Posterior cingulate gyrus (tissue), 11 donors: ENCODE measurements at regions of chr6 and their contacts with region 1.

Region 1: DNA sequence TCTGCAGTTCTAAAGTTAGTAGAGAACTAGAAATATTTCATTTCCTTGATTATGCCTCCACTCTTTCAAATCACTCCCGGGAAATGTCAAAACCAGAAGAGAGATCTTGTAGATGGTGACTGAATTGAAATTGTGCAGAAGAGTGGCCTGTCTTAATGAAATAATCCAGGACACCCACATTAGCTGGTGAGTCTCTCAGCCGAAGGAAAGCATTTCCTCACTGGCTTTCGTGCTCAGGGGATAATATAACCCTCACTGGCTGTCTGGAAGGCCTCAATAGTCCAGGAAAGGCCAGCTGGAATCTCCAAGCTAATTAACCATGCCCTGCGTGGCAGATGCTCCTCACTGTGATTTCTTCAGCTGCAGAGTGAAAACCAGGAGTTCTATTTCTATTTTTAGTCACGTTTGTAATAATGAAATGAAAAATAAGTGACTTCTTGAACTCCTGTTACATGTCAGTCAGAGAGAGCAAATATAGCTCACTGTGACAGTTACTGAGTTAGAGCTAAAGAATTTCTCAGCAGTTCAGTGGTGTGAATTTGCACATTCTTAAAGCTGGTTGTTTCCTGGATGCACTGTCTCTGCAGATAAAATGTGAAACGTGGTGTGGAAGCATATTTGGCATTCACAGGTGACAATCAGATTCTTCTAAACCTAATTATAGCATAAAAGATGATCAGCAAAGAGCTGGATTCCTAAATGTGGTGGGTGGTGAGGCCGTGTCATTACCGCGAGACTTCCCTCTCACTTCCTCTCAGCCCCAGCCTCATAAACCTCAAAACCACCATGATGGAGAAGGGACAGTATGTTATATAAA is 211.7 kb downstream of the LMBRD1 start:
- DNase-seq: no peak

Region 2: DNA sequence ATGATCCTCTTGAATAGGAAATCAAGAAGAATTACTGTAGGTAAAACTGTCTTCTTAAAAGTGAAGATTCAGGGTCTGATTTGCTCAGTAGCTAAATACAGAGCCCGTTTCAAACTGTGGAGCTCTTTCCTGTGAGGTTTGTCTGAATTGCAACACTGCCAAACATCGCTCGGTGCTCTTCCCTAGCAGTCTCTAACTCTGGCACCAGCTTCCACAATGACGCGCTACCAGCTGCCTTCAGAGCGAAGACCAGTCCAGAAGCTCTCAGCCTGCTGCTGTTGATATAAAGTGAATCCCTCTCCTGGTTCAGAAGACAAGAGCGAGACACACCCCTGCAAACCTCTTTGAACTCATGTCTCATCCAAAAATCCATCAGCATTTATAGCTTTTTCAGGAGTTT is 235.3 kb before region 1 on chr6:
- intact Hi-C with region 1: loop called (anchors 10 kb)
- DNase-seq: peak; percentile 27 to 93 (median 64)

Region 3: GRCh38 chr6:69780585-69781178 is 195.6 kb after region 1 on chr6:
- intact Hi-C with region 1: no loop called
- DNase-seq: no peak

Region 4: DNA sequence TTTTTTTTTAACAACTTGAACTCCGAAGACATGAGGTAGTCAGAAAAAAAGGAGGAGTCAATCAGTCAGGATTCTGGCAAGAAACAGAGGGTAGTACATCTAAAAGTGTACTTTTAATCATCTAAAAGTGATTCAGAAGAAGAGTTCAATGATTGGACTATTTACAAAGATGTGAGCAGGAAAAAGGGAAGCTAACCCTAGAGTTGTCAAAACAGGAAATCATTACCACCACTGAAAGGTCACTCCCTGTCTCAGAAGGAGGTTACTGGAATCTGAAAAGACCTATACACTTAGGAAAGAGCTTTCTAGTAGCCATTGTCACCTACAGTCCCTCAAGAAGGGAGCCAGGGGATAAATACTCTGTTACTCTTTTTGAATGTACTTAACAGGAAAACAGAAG is 228.4 kb after region 1 on chr6:
- intact Hi-C with region 1: no loop called
- DNase-seq: no peak